ENCODE measurements at regions of chr6 and their contacts with region 1.

Region 1: GRCh38 chr6:167485186-167485978 is 160.5 kb downstream of the TTLL2 start:
- DNase-seq: no peak
- ATAC-seq: peak; percentile 87

Region 2: DNA sequence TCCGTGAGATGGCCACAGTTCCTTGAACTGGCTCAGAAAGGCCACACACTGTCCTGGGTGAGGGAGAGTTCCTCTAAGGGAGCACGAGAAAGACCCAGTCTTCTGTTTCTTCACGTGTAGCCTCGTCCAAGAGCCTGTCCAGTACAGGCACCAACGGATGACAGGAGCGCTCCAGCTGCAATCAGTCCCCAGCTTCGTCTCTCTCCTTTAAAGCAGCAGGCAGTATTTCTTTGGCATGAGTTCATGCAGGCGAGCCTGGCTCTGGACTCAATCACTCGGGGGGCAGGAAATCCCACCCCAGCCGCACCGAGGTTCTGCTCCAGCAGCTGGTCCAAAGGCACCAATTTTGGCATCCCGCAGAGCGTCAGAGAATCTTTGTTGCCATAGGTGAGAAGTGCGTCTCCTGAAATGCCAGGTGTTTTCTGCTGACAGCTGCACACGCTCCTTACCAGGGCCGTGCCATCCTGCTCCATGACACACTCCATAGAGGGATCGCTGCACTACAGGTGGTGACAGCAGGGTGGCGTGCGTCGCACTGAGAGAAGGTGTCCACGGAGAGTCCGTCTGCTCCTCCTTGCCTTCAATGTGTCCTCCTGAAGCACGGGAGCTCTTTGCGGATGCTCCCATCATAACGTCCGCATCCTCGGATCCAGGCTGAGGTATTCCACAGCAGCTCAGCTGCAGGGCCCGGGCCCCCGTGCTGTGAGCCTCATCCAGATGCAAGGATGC is 281.8 kb after region 1 on chr6:
- intact Hi-C with region 1: no loop called
- DNase-seq: no peak
- ATAC-seq: peak; percentile 75

Region 3: DNA sequence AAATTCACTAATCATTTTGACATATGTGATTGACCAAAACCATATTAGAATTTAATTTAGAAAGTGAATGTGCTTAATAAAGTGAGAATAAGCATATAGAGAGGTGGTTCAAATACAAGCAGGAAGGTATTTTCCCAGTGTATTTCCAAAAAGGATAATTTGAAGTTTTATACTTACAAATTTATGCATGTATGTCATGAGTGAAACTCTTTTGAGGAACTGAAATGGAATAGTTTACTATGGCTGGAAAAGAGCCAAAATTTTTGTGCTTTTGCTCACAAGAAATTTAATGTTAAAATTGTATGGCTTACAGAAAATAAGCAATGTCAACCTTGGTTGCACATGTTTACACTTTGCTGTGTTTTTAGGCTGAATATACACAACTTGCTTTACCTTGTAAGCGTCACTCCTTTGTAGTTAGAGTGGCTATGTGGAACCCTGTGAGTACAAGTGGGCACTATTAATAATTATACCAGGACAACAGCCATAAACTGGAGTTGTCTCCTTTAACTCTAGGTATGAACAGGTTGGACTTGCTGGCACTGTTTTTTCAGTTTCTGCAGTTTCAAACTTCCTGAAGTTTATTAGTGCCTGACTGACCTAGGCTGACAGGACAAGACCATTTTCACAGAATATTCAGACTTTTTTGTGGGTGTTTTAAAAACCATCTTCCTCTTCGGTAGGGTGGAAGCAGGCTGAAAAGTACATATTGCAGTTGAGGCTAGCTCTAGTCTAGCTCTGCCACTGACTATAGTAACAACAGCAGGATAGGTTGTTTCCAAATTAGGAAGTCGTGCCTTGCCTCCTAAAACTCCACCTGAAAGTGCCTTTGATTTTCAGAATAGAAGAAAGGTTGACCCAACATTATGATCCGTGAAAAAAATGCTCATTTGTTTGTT is 347.4 kb after region 1 on chr6:
- intact Hi-C with region 1: loop called (anchors 5 kb)
- DNase-seq: no peak
- ATAC-seq: peak; percentile 58

Region 4: DNA sequence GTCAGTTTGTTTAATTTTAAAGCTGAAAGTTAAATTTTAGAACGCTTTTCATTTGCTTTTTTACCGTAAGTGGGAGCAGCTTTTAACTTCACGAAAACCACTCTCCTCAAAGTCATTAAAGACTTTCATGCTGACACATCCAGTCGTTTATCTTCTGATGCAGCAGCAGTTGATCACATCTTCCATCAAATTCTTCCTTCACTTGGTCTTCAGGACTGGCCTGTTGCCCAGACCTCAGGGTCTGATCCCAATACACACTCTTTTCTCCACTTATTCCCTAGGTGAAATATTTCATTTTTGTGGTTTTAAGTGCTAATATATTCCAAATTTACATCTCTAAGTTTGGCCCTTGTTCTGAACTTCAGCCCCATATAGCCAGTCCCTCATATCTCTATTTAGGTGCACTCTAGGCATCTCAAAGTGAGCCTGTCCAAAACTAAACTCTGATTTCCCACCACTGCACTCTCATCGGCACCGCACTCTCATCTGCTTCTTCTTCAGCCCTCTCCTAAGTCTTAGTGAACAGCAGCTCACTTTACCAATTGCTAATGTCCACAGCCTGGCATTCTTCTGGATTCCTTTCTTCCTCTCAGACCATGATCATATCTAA is 361.7 kb after region 1 on chr6:
- intact Hi-C with region 1: no loop called
- DNase-seq: no peak
- ATAC-seq: no peak

Region 5: DNA sequence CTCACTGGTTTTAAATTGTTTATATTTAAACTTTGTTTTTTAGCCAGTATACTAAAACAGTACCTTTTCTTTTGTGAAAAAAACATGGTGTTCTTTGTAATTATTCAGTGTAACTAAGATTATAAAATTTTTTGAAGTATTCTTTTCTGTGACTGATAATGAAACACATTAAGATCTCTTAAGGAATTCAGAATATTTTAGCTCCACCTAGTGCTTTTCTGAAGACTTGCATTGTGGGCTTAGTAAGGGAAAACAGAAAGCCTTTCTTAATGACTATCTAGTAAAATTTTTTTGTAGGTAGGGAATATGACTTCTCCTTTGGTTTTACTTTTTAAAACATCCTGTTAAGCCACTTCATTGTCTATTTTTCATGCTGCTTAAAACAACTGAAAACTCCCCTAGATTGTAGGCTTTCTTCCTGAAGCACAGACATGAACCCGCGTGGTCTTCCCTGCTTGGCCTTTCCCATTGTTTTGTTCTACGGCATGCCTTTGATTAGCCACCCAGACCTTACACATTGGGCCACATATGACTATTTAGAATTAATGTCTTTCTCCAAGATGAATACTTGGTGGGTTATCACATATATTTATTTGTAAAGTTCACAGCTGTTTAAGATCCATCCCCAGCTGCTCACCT is 413.4 kb after region 1 on chr6:
- intact Hi-C with region 1: loop called (anchors 5 kb)
- DNase-seq: no peak
- ATAC-seq: no peak

Measured in Right ventricle myocardium superior (tissue), 1 donor.